ENCODE measurements at regions of chr12 and their contacts with region 1.

Region 1: GRCh38 chr12:68317047-68317667 is 15.0 kb downstream of the MDM1 start:
- DNase-seq: no peak
- H3K4me3 ChIP-seq: no peak overlapping the region
- H3K27ac ChIP-seq: no peak overlapping the region
- H3K4me1 ChIP-seq: no peaks in the 10 kb centered on the region
- H3K27me3 ChIP-seq: no peaks in the 10 kb centered on the region
- CTCF ChIP-seq: peak; percentile 8 to 75 (median 61)
- POLR2A ChIP-seq: no peak

Region 2: GRCh38 chr12:68224613-68225290 is 92.4 kb before region 1 on chr12:
- intact Hi-C with region 1: loop called (anchors 5 kb)
- DNase-seq: no peak
- H3K4me3 ChIP-seq: no peak overlapping the region
- H3K27ac ChIP-seq: no peak overlapping the region
- H3K4me1 ChIP-seq: peaks cover 6 to 17% (median 13%) of the 10 kb centered on the region in 6 donors
- H3K27me3 ChIP-seq: peaks cover 0 to 5% (median 0%) of the 10 kb centered on the region in 7 donors
- CTCF ChIP-seq: no peak
- POLR2A ChIP-seq: no peak

Region 3: GRCh38 chr12:68358532-68359485 is 41.7 kb after region 1 on chr12:
- intact Hi-C with region 1: no loop called
- DNase-seq: no peak
- H3K4me3 ChIP-seq: peak overlapping the region in 1 of 8 donors; percentile 21
- H3K27ac ChIP-seq: peak overlapping the region; percentile 8 to 82 (median 66)
- H3K4me1 ChIP-seq: peaks cover 11 to 46% (median 22%) of the 10 kb centered on the region in 6 donors
- H3K27me3 ChIP-seq: no peaks in the 10 kb centered on the region
- CTCF ChIP-seq: peak; percentile 44 to 81 (median 74)
- POLR2A ChIP-seq: no peak